Activated naive CD4-positive, alpha-beta T cell treated with anti-CD3 and anti-CD28 coated beads for 36 hours (primary cell): ENCODE measurements at regions of chr17 and their contacts with region 1.

Region 1: DNA sequence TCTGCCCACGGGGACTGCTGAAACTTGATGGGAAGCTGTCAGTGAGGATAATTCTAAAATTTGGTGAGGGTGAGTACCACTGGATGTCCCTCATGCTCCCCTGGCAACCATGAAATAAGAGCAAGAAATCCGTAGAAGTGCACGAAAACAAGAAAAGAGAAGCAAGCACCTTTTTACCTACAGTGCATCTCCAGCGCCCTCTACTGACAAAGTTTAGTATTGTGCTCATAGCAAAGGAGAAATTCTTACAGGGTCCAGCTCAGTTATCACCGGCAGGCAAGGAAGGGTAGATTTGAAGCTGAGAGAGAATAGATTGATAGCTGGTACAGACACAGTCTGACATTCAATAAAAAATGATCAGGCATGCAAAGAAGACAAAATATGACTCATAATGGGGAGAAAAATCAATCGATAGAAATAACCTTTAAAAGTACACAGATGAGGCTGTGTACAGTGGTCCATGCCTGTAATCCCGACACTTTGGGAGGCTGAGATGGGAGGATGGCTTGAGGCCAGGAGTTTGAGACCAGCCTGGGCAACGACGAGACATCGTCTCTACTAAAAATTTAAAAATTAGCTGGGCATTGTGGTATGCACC is 28.3 kb upstream of the TEX2 start:
- DNase-seq: peak; percentile 28
- H3K4me3 Mint-ChIP-seq: no peak overlapping the region
- H3K27ac Mint-ChIP-seq: no peak overlapping the region
- H3K4me1 Mint-ChIP-seq: no peaks in the 10 kb centered on the region
- H3K27me3 Mint-ChIP-seq: no peaks in the 10 kb centered on the region

Region 2: DNA sequence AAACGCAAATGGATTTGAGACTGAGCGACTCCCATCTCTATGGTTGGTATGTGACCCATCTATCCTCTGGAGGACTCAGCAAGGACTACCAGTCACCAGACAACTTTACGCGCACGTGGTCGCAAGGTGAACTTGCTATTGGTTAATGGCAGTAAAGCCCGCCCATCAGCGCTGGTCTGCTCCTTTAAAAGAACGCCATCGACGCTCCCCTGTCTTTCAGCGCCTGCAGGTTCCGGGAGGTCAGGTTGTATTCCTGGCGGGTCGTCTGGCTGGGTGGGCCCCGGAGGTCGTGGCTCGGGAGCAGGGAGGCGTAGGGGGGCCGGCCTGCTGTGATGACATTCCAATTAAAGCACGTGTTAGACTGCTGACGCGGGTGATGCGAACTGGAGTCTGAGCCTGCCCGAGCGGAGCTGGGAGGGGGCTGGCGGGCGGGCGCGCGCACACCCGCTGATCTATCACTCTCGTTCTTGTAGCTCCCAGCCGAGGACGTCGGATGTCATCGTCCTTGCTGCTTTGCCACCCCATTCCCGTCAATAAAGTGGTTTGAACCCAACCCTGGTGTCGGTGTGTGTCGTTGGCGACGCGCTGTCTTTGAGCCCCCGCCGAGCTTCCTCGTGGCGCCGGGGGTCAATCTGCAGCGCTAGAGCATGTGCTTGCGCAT is 145.5 kb before region 1 on chr17:
- CTCF ChIA-PET with region 1: interaction called, 25 read pairs
- intact Hi-C with region 1: no loop called
- DNase-seq: peak; percentile 97
- H3K4me3 Mint-ChIP-seq: no peak overlapping the region
- H3K27ac Mint-ChIP-seq: no peak overlapping the region
- H3K4me1 Mint-ChIP-seq: peaks cover 16% of the 10 kb centered on the region
- H3K27me3 Mint-ChIP-seq: no peaks in the 10 kb centered on the region

Region 3: DNA sequence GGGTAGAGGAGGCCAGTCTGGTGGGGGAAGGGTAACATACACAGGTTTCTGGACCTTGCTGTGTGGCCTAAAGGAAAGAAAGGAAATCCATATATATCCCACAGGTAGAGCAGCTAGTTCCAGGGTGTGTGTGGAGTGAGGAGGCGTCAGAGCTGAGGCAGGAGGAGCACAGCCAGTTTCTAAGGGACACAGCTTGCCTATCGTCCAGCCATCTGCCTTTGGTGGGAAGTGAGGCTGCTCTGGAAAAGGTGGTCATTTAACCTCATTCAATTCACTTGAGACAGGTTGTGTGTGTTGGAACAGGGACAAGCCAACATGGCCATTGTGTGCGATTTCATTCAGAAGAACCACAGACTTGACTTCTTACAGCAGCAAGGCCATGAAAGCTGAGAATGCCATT is 124.5 kb before region 1 on chr17:
- CTCF ChIA-PET with region 1: interaction called, 14 read pairs
- intact Hi-C with region 1: no loop called
- DNase-seq: no peak
- H3K4me3 Mint-ChIP-seq: no peak overlapping the region
- H3K27ac Mint-ChIP-seq: no peak overlapping the region
- H3K4me1 Mint-ChIP-seq: no peaks in the 10 kb centered on the region
- H3K27me3 Mint-ChIP-seq: no peaks in the 10 kb centered on the region

Region 4: GRCh38 chr17:64306850-64307463 is 15.6 kb after region 1 on chr17:
- CTCF ChIA-PET with region 1: interaction called, 28 read pairs
- intact Hi-C with region 1: no loop called
- DNase-seq: peak; percentile 80
- H3K4me3 Mint-ChIP-seq: no peak overlapping the region
- H3K27ac Mint-ChIP-seq: no peak overlapping the region
- H3K4me1 Mint-ChIP-seq: peaks cover 2% of the 10 kb centered on the region
- H3K27me3 Mint-ChIP-seq: no peaks in the 10 kb centered on the region

Region 5: DNA sequence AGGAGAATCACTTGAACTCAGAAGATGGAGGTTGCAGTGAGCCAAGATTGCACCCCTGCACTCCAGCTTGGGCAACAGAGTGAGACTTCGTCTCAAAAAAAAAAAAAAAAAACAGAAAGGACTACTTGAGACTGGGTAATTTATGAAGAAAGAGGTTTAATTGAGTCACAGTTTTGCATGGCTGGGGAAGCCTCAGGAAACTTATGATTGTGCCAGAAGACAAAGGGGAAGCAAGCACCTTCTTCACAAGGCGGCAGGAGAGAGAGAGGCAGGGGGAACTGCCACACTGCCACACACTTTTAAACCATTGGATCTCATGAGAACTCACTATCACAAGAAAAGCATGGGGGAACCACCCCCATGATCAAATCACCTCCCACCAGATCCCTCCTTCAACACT is 148.6 kb after region 1 on chr17:
- CTCF ChIA-PET with region 1: no interaction called
- intact Hi-C with region 1: no loop called
- DNase-seq: no peak
- H3K4me3 Mint-ChIP-seq: no peak overlapping the region
- H3K27ac Mint-ChIP-seq: no peak overlapping the region
- H3K4me1 Mint-ChIP-seq: peaks cover 25% of the 10 kb centered on the region
- H3K27me3 Mint-ChIP-seq: no peaks in the 10 kb centered on the region

Region 6: DNA sequence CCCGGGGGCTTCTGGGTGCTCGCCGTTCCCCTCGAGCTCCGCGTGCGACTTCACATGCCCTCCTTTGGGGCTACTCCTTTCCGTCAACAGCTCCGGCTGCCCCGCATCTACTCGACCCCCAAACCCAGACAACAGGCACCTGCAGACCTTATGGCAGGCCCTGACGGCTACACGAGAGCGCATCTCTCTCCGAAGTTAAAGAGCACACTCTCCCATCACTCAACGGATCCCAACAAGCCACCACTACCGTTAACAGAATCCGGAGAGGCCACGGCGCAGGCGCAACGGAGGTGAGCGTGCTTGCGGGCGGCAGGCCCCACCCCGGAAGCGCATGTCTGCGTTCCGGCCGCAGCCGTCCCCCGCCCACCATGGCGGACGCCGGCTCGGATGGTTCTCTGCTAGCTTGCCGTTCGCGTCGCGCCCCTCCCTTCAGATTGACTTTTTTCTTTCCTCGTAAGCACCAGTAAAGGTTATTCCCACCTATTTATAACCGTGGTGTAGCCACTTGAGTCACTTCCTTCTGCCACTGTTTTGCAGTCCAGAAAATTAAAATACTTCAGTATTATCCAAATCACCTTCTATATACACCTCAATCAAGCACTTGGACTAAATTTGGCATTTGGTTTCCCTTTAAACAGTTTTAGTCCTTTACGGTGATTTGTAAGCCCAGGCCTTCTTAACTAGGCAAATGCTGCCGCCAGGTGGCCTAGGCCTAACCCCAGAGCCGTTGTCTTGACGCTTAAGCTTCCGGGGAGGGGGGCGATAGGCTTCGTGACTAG is 205.6 kb after region 1 on chr17 and contains the start of gene POLG2:
- CTCF ChIA-PET with region 1: no interaction called
- intact Hi-C with region 1: no loop called
- DNase-seq: peak; percentile 96
- H3K4me3 Mint-ChIP-seq: peak within 1 kb of the TSS; percentile 100
- H3K27ac Mint-ChIP-seq: peak within 1 kb of the TSS; percentile 97
- H3K4me1 Mint-ChIP-seq: peaks cover 74% of the 10 kb centered on the region
- H3K27me3 Mint-ChIP-seq: no peaks in the 10 kb centered on the region
- total RNA-seq, gene POLG2: 23.4 to 26.9 TPM